ENCODE measurements at regions of chr7 and their contacts with region 1.

Region 1: GRCh38 chr7:134778941-134779740 is at the start of gene CALD1:
- DNase-seq: peak; percentile 89
- total RNA-seq, gene CALD1: 237 TPM

Region 2: DNA sequence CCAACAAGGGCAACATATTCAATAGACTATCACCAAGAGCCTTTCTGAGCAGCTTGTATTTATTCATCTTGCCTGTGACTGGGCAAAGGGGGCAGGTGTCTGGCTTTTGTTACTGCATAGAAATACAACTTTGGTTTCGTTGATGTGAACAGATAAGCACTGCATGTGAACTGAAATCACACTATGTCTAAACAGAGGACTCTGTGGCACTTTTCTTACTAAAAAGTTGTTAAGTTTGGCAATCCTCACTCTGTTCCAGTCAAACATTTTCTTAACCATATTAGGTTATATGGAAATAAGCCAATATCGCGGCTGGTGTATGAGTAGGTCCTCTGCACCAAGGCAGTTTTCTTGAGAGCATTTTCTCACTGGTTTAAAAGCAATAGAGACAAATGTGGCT is 48.7 kb after region 1 on chr7:
- intact Hi-C with region 1: loop called (anchors 2 kb)
- DNase-seq: no peak

Region 3: DNA sequence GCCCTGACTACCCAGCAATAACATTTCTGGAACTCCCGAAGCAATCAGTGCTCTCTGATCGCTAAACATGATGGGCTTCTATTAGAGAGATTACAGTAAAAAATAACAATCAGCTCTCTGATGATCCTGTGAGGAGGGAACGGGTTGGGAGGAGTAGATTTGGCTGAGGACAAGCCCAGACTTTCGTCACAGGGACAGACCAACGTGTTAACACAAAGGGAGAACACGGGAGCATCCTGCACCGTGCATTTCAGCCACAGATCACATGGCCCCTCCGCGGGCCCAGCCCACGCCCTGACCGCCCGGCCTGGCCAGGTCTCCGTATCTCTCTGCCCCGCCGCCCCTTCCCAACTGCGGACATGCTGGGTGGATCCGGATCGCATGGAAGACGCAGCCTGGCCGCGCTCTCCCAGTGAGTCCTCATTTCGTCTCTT is 112.1 kb after region 1 on chr7:
- intact Hi-C with region 1: loop called (anchors 2 kb)
- DNase-seq: peak; percentile 92

Region 4: DNA sequence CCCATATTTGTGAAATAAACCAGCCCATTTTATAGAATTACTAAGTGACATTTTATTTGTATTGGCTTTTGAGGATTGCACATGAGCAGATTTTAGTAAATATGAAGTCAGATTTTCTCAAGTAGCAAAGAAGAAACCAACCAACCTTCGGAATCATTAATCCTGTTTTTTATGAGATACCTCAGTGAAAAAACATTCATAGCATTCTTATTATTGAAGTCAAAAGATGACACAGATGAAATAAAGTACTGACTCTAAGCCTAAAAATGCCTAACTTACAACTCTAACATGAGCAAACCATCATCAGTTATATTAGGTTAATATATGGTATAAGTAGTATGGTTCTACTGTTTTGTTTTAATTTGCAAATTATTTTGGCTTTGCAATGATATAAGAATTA is 147.3 kb after region 1 on chr7:
- intact Hi-C with region 1: loop called (anchors 5 kb)
- DNase-seq: no peak